ENCODE measurements at regions of chr9 and their contacts with region 1.

Region 1: GRCh38 chr9:124551472-124552272 is 44.5 kb upstream of the NR5A1 start:
- DNase-seq: peak; percentile 46
- ATAC-seq: peak; percentile 94
- H3K4me3 ChIP-seq: no peak overlapping the region
- H3K27ac ChIP-seq: no peak overlapping the region
- H3K4me1 ChIP-seq: peaks cover 2 to 24% of the 10 kb centered on the region in 2 experiments; a peak in 3 of 4 replicates
- H3K27me3 ChIP-seq: no peaks in the 10 kb centered on the region
- CTCF ChIP-seq: peak; percentile 80 to 93 (median 87)
- POLR2A ChIP-seq: no peak
- RAD21 ChIP-seq: peak; percentile 92

Region 2: GRCh38 chr9:124537926-124538325 is 13.7 kb before region 1 on chr9:
- CTCF ChIA-PET with region 1: interaction called, 24 read pairs
- POLR2A ChIA-PET with region 1: no interaction called
- RAD21 ChIA-PET with region 1: interaction called in 1 of 2 experiments, 6 read pairs
- intact Hi-C with region 1: no loop called
- DNase-seq: no peak
- ATAC-seq: no peak
- H3K4me3 ChIP-seq: no peak overlapping the region
- H3K27ac ChIP-seq: no peak overlapping the region
- H3K4me1 ChIP-seq: no peaks in the 10 kb centered on the region
- H3K27me3 ChIP-seq: no peaks in the 10 kb centered on the region
- CTCF ChIP-seq: no peak
- POLR2A ChIP-seq: no peak
- RAD21 ChIP-seq: no peak

Region 3: DNA sequence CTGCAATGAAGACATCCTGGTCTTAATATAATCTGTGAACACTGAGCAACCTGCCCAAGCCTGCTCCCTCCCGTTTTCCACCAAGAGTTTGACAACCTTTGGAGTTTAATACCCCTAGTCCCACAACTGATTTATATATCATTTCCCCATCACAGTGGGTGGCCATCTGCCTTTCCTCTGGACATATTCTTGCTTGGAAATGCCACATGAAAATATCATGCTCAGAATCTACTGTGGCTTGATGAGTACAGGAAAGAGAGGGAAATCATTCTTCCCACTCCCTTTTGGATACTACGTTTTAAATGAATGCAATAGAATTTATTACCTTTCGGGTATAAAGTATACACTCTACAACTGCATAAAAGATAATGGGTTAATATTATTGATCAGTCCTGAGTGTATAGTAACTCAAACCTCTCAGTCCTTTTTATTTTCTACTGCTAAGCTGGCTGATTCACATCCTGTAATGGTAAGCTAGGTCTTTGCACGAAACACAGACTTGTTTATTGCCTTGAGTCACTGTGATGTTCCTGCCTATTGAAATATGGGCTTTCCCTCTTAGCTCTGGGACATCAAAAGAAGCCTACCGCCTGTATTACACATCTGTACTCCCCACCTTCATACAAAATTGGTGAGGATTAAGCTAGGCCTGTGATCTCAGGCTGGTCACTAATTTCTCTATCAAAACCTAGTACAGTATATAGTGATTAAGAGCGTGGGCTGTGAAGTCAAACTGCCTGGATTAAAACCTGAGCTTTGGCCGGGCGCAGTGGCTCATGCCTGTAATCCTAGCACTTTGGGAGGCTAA is 23.1 kb after region 1 on chr9:
- CTCF ChIA-PET with region 1: interaction called, 13 read pairs
- POLR2A ChIA-PET with region 1: no interaction called
- RAD21 ChIA-PET with region 1: interaction called, 7 to 8 read pairs
- intact Hi-C with region 1: no loop called
- DNase-seq: peak; percentile 98
- ATAC-seq: peak; percentile 87
- H3K4me3 ChIP-seq: peak overlapping the region in 1 of 2 experiments; percentile 21; a peak in 2 of 4 replicates
- H3K27ac ChIP-seq: peak overlapping the region; percentile 73
- H3K4me1 ChIP-seq: peaks cover 43 to 81% of the 10 kb centered on the region in 2 experiments
- H3K27me3 ChIP-seq: no peaks in the 10 kb centered on the region
- CTCF ChIP-seq: no peak
- POLR2A ChIP-seq: no peak
- RAD21 ChIP-seq: peak; percentile 39

Region 4: GRCh38 chr9:124708633-124709291 is 157.1 kb after region 1 on chr9:
- CTCF ChIA-PET with region 1: interaction called, 20 read pairs
- POLR2A ChIA-PET with region 1: no interaction called
- RAD21 ChIA-PET with region 1: interaction called, 4 to 6 read pairs
- intact Hi-C with region 1: loop called (anchors 1 kb)
- DNase-seq: no peak
- ATAC-seq: no peak
- H3K4me3 ChIP-seq: no peak overlapping the region
- H3K27ac ChIP-seq: no peak overlapping the region
- H3K4me1 ChIP-seq: peaks cover 3 to 13% of the 10 kb centered on the region in 2 experiments
- H3K27me3 ChIP-seq: no peaks in the 10 kb centered on the region
- CTCF ChIP-seq: no peak
- POLR2A ChIP-seq: no peak
- RAD21 ChIP-seq: no peak

Region 5: DNA sequence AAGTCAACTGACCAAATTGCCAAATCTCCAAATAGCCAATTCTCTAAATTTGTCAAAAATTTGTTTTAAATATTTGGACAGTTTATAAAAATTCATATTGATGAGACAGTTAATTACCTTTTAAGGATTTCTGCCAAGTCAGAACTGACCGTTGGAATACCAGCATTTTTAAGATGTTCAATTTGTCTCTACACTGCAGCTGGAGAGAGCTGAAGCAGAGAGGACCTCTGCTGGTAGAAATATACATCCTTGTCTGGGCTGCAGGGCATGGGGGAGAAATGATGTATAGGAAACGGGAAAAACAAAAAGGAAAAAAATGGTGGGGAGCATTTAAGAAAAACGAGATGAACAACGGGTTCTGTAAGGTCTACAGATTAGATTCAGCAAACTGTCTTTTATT is 202.6 kb after region 1 on chr9:
- CTCF ChIA-PET with region 1: no interaction called
- POLR2A ChIA-PET with region 1: no interaction called
- RAD21 ChIA-PET with region 1: no interaction called
- intact Hi-C with region 1: loop called (anchors 1 kb)
- DNase-seq: no peak
- ATAC-seq: peak; percentile 75
- H3K4me3 ChIP-seq: no peak overlapping the region
- H3K27ac ChIP-seq: no peak overlapping the region
- H3K4me1 ChIP-seq: peaks cover 22 to 39% of the 10 kb centered on the region in 2 experiments
- H3K27me3 ChIP-seq: no peaks in the 10 kb centered on the region
- CTCF ChIP-seq: peak; percentile 50 to 69 (median 60); a peak in 5 of 6 replicates
- POLR2A ChIP-seq: no peak
- RAD21 ChIP-seq: peak; percentile 73

Region 6: DNA sequence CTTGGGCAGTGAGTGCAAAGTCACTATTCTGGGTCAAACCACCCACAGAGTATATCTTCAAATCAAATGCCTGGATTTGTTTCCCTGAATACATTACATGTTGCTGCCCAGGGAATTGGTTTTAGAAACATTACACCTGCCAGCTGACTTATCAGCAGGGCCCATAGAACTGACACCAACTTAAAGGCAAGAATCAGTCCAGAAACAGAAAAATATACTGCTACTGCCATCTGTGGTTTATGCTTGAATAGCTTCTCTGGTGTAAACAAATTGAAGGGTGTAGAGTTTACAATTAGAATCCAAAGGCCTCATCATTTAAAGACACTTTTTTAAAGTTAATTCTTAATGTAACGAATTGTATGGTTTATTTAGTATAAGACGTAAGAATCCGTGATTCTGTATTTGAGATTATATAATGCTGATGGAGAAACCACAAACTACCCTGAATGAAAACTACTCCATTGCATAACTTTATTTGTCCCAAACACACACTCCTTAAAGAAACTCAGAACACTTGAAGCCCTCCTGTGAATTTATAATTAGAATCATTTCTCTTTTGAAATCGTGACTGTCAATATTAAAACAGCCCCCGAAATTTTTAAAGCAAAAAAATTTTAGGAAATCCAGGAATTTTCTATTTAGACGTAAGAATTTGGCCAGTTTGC is 213.2 kb after region 1 on chr9:
- CTCF ChIA-PET with region 1: interaction called, 7 read pairs
- POLR2A ChIA-PET with region 1: no interaction called
- RAD21 ChIA-PET with region 1: no interaction called
- intact Hi-C with region 1: loop called (anchors 5 kb)
- DNase-seq: no peak
- ATAC-seq: peak; percentile 41; the same call in 1 of the 2 replicates
- H3K4me3 ChIP-seq: no peak overlapping the region
- H3K27ac ChIP-seq: no peak overlapping the region
- H3K4me1 ChIP-seq: peaks cover 25 to 27% of the 10 kb centered on the region in 2 experiments
- H3K27me3 ChIP-seq: no peaks in the 10 kb centered on the region
- CTCF ChIP-seq: peak in 2 of 3 experiments; percentile 23 to 46; a peak in 3 of 6 replicates
- POLR2A ChIP-seq: no peak
- RAD21 ChIP-seq: no peak

Measured in HCT116 (cell line).